ENCODE measurements at regions of chr7 and their contacts with region 1.

Region 1: DNA sequence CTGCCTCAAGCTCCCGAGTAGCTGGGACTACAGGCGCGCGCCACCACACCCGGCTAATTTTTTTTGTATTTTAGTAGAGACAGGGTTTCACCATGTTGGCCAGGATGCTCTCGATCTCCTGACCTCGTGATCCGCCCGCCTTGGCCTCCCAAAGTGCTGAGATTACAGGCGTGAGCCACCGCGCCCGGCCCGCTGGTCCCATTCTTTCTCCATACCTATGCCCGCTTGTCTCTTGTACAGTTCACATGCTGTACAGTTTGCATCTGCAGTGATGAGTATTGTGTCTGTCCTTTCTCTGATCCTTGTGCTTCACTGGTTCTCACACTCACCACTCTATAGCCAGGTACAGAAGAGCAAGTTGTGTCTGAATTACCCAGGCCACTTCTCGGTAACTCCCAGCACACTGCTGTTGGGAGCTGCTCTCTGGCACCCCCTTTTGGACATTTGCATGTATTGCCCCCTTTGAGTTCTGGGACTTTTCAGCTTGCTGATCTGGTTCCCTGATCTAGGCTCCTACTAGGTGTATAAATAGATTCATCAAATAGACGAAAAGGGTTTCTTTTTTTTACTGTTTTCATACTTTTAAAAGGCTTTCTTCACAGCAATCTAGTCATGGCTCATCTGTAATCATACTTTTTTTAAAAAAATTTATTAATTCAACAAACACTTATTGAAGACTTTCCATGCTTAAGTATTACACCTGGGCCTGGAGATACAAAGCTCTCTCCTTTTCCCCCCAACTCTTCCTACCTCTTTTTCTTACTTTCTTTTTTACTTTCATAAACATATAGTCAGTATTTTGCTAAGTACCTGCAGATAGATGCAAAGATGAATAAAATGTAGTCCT is 53.5 kb downstream of the AOAH start:
- DNase-seq: peak; percentile 85
- H3K4me3 Mint-ChIP-seq: no peak overlapping the region
- H3K27ac Mint-ChIP-seq: no peak overlapping the region
- H3K4me1 Mint-ChIP-seq: peaks cover 28% of the 10 kb centered on the region
- H3K27me3 Mint-ChIP-seq: no peaks in the 10 kb centered on the region
- CTCF ChIP-seq: peak; percentile 85

Region 2: GRCh38 chr7:36318116-36318515 is 352.7 kb before region 1 on chr7:
- CTCF ChIA-PET with region 1: no interaction called
- POLR2A ChIA-PET with region 1: no interaction called
- intact Hi-C with region 1: no loop called
- DNase-seq: no peak
- H3K4me3 Mint-ChIP-seq: no peak overlapping the region
- H3K27ac Mint-ChIP-seq: no peak overlapping the region
- H3K4me1 Mint-ChIP-seq: peaks cover 5% of the 10 kb centered on the region
- H3K27me3 Mint-ChIP-seq: no peaks in the 10 kb centered on the region
- CTCF ChIP-seq: no peak

Region 3: GRCh38 chr7:36506820-36507219 is 164.0 kb before region 1 on chr7:
- CTCF ChIA-PET with region 1: interaction called, 15 read pairs
- POLR2A ChIA-PET with region 1: no interaction called
- intact Hi-C with region 1: no loop called
- DNase-seq: peak; percentile 68
- H3K4me3 Mint-ChIP-seq: no peak overlapping the region
- H3K27ac Mint-ChIP-seq: no peak overlapping the region
- H3K4me1 Mint-ChIP-seq: peaks cover 6% of the 10 kb centered on the region
- H3K27me3 Mint-ChIP-seq: no peaks in the 10 kb centered on the region
- CTCF ChIP-seq: no peak

Region 4: DNA sequence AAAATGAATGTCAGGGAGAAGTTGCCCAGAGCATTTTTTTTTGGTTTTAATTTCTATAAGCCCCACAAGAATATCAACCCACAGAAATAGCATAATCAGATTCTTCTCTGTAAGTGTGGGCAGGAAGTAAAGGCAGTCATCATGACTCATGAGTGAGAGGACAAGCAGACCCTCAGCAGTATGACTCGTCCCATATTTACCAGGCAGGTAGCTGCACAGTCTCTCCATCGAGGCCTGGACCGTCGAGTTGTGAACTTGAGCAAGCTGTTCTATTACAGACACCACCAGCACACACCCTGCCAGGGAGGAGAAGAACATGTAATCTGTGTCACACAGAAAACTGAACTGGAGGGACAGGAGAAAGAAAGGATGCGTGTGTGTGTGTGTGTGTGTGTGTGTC is 15.7 kb after region 1 on chr7:
- CTCF ChIA-PET with region 1: interaction called, 32 read pairs
- POLR2A ChIA-PET with region 1: interaction called, 4 read pairs
- intact Hi-C with region 1: no loop called
- DNase-seq: peak; percentile 30
- H3K4me3 Mint-ChIP-seq: no peak overlapping the region
- H3K27ac Mint-ChIP-seq: peak overlapping the region; percentile 59
- H3K4me1 Mint-ChIP-seq: peaks cover 40% of the 10 kb centered on the region
- H3K27me3 Mint-ChIP-seq: no peaks in the 10 kb centered on the region
- CTCF ChIP-seq: no peak

Region 5: GRCh38 chr7:36967387-36967786 is 296.6 kb after region 1 on chr7:
- CTCF ChIA-PET with region 1: no interaction called
- POLR2A ChIA-PET with region 1: no interaction called
- intact Hi-C with region 1: loop called (anchors 10 kb)
- DNase-seq: peak; percentile 73
- H3K4me3 Mint-ChIP-seq: no peak overlapping the region
- H3K27ac Mint-ChIP-seq: no peak overlapping the region
- H3K4me1 Mint-ChIP-seq: no peaks in the 10 kb centered on the region
- H3K27me3 Mint-ChIP-seq: no peaks in the 10 kb centered on the region
- CTCF ChIP-seq: peak; percentile 71

Region 6: DNA sequence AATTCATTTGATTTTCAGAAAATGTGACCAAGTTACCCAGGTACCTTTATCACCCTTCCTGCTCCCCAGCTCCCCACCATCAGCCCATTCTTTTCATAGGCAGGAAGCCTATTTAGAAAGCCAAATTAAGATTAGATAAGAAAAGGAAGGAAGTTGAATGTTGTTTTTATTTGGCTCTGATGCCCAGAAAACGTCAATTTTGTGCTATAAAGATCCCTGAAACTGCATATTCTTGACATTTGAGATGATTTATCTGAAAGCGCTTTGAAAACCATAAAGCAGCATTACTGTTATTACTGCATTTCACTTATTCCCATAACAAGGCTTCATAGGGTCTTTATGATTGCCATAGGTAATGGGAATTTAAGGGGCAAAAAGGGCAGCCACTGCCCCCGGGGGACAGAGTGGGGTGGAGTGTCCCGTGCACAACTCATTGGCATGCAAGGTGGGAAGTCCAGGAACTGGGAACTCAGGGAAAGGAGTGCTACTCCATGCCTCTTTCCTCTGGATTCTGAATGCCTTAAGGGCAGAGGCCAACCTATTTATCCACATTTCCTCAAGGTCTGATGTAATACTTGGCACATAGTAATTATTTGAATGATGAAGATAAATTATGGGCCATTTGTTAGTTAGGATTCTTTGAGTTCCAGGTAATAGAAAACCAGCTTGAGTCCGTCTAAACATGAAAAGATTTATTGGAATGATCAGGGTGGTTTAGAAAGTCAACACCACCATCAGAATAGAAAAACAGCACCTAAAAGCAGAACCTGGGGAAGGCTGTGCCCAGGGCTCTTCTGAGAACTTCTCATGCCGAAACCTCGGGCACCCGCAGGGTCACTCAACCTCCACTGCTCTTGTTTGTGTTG is 878.5 kb after region 1 on chr7:
- CTCF ChIA-PET with region 1: no interaction called
- POLR2A ChIA-PET with region 1: no interaction called
- intact Hi-C with region 1: no loop called
- DNase-seq: peak; percentile 11
- H3K4me3 Mint-ChIP-seq: no peak overlapping the region
- H3K27ac Mint-ChIP-seq: no peak overlapping the region
- H3K4me1 Mint-ChIP-seq: peaks cover 10% of the 10 kb centered on the region
- H3K27me3 Mint-ChIP-seq: no peaks in the 10 kb centered on the region
- CTCF ChIP-seq: no peak

Measured in MCF 10A (cell line).